Mucosa of descending colon (tissue), 3 donors: ENCODE measurements at regions of chr17 and their contacts with region 1.

Region 1: DNA sequence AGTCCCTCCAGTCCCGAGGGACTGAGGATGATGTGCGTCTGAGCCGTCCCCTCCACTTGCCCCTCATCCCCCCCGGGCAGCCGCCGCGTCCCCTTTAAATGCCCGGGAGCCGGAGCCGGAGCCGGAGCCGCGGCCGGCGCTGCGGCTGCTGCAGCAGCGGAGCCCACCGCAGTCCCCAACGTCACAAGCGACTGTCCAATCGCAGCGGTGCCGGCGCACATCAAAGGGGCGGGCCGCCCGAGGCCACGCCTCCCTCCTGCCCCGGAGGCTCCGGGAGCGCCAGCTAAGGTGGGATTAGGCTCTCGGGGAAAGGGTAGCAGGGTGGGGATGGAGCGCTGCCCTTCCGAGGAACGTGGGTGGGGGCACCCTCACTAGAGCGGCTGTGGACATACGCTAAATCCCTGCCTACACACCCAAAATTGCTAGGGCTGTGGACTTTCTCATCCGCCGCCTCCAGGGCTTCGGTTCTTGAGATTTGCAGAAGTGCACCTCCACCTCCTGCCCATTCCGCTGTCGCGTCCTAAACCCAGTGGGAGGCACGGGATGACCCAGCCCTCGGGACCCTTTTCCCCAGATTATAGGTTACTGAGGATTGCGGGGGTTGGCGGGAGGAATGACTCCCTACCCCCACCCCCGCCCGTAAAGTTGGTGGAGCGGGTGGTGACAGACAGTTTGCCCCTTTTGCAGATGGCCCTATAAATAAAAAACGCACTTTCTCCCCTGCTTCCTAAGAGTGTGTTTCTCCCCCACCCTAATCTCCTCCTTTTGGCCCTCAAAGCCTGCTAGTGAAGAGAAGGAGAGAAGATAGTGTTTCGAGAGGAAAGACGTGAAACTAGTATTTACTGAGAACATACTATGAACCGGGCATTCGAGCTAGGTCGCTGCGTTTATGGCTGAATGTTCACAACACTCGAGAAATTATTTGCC is at the start of gene PHOSPHO1:
- DNase-seq: peak; percentile 85 to 90 (median 89)
- ATAC-seq: peak; percentile 91
- H3K4me3 ChIP-seq: no peak within 1 kb of the TSS
- H3K4me1 ChIP-seq: peaks cover 17% of the 10 kb centered on the region
- CTCF ChIP-seq: no peak
- total RNA-seq, gene PHOSPHO1: 0.25 TPM in 1 of 3 donors, not detected in the others

Region 2: DNA sequence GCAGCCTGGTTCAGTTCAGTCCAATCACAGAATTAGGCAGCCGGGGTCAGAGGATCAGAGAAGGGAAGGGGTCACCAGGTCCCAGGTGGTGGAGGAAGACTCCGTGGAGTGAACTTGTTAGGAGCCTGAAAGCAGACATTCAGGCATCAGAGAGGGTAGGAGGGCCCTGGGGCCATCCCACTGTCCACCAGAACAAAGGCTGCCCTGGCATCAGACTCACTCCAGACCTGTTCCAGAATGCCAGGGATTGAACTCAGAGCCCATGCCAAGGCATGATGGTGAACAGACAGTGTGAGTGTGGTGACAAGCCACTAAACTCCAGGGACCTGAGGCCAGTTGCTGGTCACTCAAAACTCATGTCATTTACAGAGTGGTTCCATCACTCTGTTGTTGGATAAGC is 60.7 kb before region 1 on chr17:
- intact Hi-C with region 1: loop called in 1 of 2 experiments (anchors 10 kb)
- DNase-seq: no peak
- ATAC-seq: no peak
- H3K4me3 ChIP-seq: no peak overlapping the region
- H3K4me1 ChIP-seq: no peaks in the 10 kb centered on the region
- CTCF ChIP-seq: no peak

Region 3: GRCh38 chr17:49180303-49180702 is 50.6 kb before region 1 on chr17:
- intact Hi-C with region 1: loop called (anchors 10 kb)
- DNase-seq: peak in 2 of 3 donors; percentile 73 to 86
- ATAC-seq: peak; percentile 89
- H3K4me3 ChIP-seq: no peak overlapping the region
- H3K4me1 ChIP-seq: no peaks in the 10 kb centered on the region
- CTCF ChIP-seq: peak; percentile 76

Region 4: GRCh38 chr17:49327835-49328784 is 97.2 kb after region 1 on chr17:
- intact Hi-C with region 1: no loop called
- DNase-seq: no peak
- ATAC-seq: no peak
- H3K4me3 ChIP-seq: no peak overlapping the region
- H3K4me1 ChIP-seq: no peaks in the 10 kb centered on the region
- CTCF ChIP-seq: no peak

Region 5: GRCh38 chr17:49450735-49451134 is 219.8 kb after region 1 on chr17:
- intact Hi-C with region 1: no loop called
- DNase-seq: no peak
- ATAC-seq: no peak
- H3K4me3 ChIP-seq: no peak overlapping the region
- H3K4me1 ChIP-seq: no peaks in the 10 kb centered on the region
- CTCF ChIP-seq: no peak